Activated CD4-positive, alpha-beta T cell treated with anti-CD3 and anti-CD28 coated beads for 36 hours (primary cell): ENCODE measurements at regions of chr1 and their contacts with region 1.

Region 1: DNA sequence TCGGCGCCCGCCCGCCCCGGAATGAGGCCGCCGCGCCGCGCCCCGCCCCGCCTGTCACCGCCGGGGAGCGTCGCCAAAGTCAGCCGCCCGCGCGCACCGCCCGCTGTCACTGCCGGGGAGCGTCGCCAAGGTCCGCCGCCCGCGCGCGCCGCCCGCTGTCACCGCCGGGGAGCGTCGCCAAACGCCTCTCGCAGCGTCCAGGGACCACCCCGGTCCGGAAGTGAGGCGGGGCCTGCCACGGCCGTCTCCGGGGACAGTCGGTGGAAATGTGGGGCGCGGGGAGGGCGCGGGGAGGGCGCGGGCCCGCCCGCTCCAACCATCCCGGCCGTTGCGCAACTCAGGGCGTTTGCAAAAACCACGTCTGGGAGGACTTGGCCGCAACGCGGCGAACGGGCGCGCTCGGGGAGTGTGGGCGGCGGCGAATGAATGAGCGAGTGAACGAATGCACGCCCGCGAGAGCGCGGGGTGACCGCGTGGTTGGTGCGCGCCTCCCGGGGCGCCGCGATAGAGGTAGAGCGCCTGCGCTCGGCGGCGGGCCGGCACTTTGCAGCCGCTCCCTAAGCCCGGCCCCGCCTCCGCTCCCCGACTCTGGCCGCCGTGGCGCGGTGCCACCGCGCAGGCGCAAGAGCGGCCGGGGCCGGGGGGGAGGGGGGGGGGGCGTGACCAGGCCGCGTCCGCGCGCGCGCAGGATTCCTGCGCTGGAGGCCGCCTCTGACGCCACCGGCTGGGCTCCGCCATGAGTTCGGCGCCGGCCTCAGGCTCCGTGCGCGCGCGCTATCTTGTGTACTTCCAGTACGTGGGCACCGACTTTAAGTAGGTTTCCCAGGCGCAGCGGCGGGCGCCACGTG is at the starts of genes ACAP3 and PUSL1:
- DNase-seq: peak; percentile 94
- ATAC-seq: peak; percentile 73
- H3K4me3 Mint-ChIP-seq: peak within 1 kb of the TSS; percentile 80
- H3K27ac Mint-ChIP-seq: peak within 1 kb of the TSS; percentile 84
- H3K4me1 Mint-ChIP-seq: peaks cover 23% of the 10 kb centered on the region
- H3K27me3 Mint-ChIP-seq: no peaks in the 10 kb centered on the region
- total RNA-seq, gene ACAP3: 17.5 to 24.3 TPM
- total RNA-seq, gene PUSL1: 13.7 to 18.0 TPM

Region 2: GRCh38 chr1:869499-870244 is 438.5 kb before region 1 on chr1:
- CTCF ChIA-PET with region 1: no interaction called
- POLR2A ChIA-PET with region 1: no interaction called
- intact Hi-C with region 1: no loop called
- DNase-seq: peak; percentile 89
- ATAC-seq: peak; percentile 95
- H3K4me3 Mint-ChIP-seq: no peak overlapping the region
- H3K27ac Mint-ChIP-seq: no peak overlapping the region
- H3K4me1 Mint-ChIP-seq: peaks cover 2% of the 10 kb centered on the region
- H3K27me3 Mint-ChIP-seq: peaks cover 19% of the 10 kb centered on the region

Region 3: GRCh38 chr1:1033009-1033587 is 275.0 kb before region 1 on chr1:
- CTCF ChIA-PET with region 1: no interaction called
- POLR2A ChIA-PET with region 1: no interaction called
- intact Hi-C with region 1: loop called (anchors 1 to 10 kb)
- DNase-seq: peak; percentile 97
- ATAC-seq: peak; percentile 95
- H3K4me3 Mint-ChIP-seq: peak overlapping the region; percentile 33
- H3K27ac Mint-ChIP-seq: no peak overlapping the region
- H3K4me1 Mint-ChIP-seq: peaks cover 5% of the 10 kb centered on the region
- H3K27me3 Mint-ChIP-seq: peaks cover 18% of the 10 kb centered on the region

Region 4: GRCh38 chr1:1231400-1232223 is 76.5 kb before region 1 on chr1 and contains the start of gene SDF4:
- CTCF ChIA-PET with region 1: no interaction called
- POLR2A ChIA-PET with region 1: no interaction called
- intact Hi-C with region 1: loop called in 1 of 2 experiments (anchors 1 kb)
- DNase-seq: peak; percentile 98
- ATAC-seq: peak; percentile 98
- H3K4me3 Mint-ChIP-seq: peak within 1 kb of the TSS; percentile 94
- H3K27ac Mint-ChIP-seq: peak within 1 kb of the TSS; percentile 91
- H3K4me1 Mint-ChIP-seq: peaks cover 35% of the 10 kb centered on the region
- H3K27me3 Mint-ChIP-seq: no peaks in the 10 kb centered on the region
- total RNA-seq, gene SDF4: 108 to 128 TPM

Region 5: GRCh38 chr1:1331068-1331965 is 23.2 kb after region 1 on chr1 and contains the start of gene TAS1R3:
- CTCF ChIA-PET with region 1: no interaction called
- POLR2A ChIA-PET with region 1: no interaction called
- intact Hi-C with region 1: no loop called
- DNase-seq: no peak
- ATAC-seq: no peak
- H3K4me3 Mint-ChIP-seq: no peak within 1 kb of the TSS
- H3K27ac Mint-ChIP-seq: no peak within 1 kb of the TSS
- H3K4me1 Mint-ChIP-seq: peaks cover under 1% of the 10 kb centered on the region
- H3K27me3 Mint-ChIP-seq: no peaks in the 10 kb centered on the region
- total RNA-seq, gene TAS1R3: 0.28 to 0.41 TPM

Region 6: DNA sequence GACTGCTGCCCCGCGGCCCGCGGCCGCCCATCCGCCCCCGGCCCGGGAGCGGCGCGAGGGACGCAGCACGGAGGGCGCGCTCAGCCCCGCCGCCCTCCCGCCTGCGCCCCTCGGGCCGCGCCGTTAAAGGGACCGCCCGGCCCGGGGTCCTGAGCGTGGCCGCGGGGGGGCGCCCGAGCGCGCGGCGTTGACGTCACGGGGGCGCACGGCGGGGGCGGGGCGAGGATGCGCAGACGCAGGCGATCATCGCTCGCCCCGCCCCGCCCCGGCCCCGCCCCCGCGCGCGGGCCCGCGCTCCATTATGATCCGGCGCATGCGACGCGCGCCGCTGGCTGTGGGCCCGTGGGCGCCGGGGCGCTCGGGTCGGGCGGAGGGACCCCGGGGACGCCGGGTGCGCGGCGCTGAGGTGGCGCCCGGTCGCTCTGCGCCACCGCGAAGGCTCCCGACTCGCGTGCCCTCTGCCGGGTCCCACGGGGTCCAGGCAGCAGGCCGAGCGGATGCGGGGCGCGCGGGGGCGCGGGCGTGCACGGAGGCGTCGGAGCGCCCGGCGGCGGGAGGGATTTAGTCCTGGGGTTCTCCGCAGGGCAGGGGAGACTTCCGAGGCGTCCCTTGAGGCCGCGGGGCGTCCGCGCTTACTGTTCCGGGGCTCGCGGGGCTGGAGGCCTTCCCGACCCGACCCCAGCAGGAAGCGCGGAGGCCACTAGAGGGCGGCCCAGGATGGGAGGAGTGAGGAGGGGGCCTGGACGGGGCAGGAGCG is 41.3 kb after region 1 on chr1 and contains the start of gene DVL1:
- CTCF ChIA-PET with region 1: no interaction called
- POLR2A ChIA-PET with region 1: no interaction called
- intact Hi-C with region 1: loop called in 1 of 2 experiments (anchors 1 kb)
- DNase-seq: peak; percentile 81
- ATAC-seq: peak; percentile 71
- H3K4me3 Mint-ChIP-seq: peak within 1 kb of the TSS; percentile 74
- H3K27ac Mint-ChIP-seq: no peak within 1 kb of the TSS
- H3K4me1 Mint-ChIP-seq: peaks cover 25% of the 10 kb centered on the region
- H3K27me3 Mint-ChIP-seq: peaks cover 11% of the 10 kb centered on the region
- total RNA-seq, gene DVL1: 35.3 to 35.5 TPM

Region 7: DNA sequence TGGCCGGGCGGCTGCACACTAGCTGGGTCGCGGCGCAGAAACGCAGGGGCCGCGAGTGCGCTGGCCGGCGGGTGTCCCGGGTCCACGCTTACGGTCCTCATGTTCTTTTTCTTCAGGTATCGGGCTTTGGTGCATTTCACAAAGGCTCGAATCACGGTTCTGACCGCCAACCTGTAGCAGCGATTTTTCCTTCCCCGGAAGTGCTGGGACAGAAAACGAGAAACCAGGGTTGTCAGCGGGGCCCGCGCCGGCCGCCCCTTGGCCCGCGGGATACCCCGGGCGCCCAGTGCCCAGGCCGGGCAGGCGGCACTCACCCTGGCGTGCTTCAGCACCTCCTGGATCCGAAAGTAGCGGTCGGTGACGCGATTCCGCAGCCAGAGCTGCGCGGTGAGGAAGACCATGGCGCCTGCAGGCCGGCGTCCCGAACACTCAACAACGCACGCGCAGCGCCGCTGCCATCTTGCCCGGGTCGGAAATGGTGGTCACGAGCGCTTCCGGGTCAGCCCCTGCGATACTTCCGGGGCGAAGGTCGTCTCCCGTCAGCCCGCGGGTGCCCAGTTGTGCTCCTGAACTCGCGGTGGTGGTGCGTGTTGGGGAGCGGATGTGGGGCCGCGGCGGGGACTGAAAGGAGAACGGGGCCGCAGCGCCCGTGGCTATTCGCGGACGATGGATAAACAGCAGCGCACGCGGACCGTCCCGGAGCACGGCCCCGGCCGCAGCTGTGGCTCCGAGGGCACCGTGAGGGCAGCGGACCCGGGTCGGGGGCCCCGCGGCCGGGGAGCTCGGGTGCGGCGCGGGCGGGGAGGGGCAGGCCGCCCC is 98.9 kb after region 1 on chr1 and contains the start of gene MRPL20:
- CTCF ChIA-PET with region 1: no interaction called
- POLR2A ChIA-PET with region 1: no interaction called
- intact Hi-C with region 1: loop called (anchors 1 kb)
- DNase-seq: peak; percentile 98
- ATAC-seq: peak; percentile 95
- H3K4me3 Mint-ChIP-seq: peak within 1 kb of the TSS; percentile 92
- H3K27ac Mint-ChIP-seq: peak within 1 kb of the TSS; percentile 91
- H3K4me1 Mint-ChIP-seq: peaks cover 41% of the 10 kb centered on the region
- H3K27me3 Mint-ChIP-seq: no peaks in the 10 kb centered on the region
- total RNA-seq, gene MRPL20: 126 to 143 TPM

Region 8: DNA sequence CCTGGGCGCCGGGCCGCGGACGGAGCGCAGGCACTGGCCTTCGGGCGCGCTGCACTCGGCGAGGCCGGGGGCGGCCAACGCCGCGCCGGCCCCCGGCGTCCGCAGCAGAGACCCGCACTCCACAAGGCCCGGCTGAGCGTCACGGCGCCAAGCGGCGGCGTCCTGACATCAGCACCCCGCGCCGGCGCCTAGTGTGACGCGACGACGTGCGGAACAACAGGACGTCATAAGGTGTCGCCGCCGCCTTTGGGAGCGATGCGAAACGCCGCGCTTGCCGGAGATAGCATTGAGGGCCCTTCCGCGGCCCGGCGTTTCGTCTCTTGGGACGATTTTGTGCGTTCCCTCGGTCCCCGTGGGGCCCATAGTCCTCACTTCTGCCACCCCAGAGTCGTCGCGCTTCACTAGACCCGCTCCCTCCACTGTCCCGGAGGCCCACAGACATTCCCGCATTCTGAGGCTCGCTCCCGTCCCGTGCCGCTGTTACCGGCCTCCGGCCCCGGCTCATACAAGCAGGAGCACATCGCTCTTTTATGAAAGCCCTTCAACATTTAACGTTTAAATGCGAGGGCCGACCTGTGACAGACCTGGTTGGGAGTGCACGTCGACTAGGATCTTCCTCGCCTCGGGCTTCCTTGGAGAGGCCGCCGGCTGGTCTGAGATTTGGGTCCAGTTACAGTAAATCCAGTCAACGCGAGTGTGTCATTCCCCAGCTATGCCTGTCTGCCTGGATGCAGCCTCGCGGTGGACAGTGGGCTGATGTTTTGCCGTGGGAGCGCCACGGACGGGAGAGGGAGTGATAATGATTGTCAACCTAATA is 266.8 kb after region 1 on chr1 and contains the start of gene SSU72:
- CTCF ChIA-PET with region 1: no interaction called
- POLR2A ChIA-PET with region 1: no interaction called
- intact Hi-C with region 1: loop called in 1 of 2 experiments (anchors 1 kb)
- DNase-seq: peak; percentile 97
- ATAC-seq: peak; percentile 84
- H3K4me3 Mint-ChIP-seq: peak within 1 kb of the TSS; percentile 99
- H3K27ac Mint-ChIP-seq: peak within 1 kb of the TSS; percentile 98
- H3K4me1 Mint-ChIP-seq: peaks cover 28% of the 10 kb centered on the region
- H3K27me3 Mint-ChIP-seq: no peaks in the 10 kb centered on the region
- total RNA-seq, gene SSU72: 105 to 123 TPM

Region 9: DNA sequence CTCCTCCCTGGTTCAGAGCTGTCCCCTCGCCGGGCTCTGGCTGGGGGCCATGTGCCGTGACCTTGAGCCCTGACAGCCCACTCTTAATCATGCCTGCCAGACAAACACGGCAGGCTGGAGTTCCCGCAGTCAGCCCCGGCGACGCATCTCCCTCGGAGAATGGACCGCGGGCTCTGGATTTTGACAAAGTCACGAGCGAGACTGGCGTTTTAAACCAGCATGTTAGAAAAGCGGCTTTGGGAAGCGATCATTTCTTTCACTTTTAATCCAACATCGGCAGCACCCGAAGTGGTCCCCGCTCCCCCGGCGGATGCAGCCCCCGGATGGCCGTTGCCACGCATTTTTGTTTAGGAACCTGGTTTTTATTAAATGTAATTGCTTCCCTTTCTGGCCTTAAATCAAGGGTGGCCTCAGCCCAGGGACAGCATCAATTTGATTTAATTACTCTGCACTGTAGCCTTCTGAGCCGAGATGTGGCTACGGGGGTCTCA is 1831.8 kb after region 1 on chr1:
- CTCF ChIA-PET with region 1: no interaction called
- POLR2A ChIA-PET with region 1: no interaction called
- intact Hi-C with region 1: no loop called
- DNase-seq: no peak
- ATAC-seq: no peak
- H3K4me3 Mint-ChIP-seq: no peak overlapping the region
- H3K27ac Mint-ChIP-seq: no peak overlapping the region
- H3K4me1 Mint-ChIP-seq: no peaks in the 10 kb centered on the region
- H3K27me3 Mint-ChIP-seq: no peaks in the 10 kb centered on the region